PC-3 (cell line): ENCODE measurements at regions of chr13 and their contacts with region 1.

Region 1: DNA sequence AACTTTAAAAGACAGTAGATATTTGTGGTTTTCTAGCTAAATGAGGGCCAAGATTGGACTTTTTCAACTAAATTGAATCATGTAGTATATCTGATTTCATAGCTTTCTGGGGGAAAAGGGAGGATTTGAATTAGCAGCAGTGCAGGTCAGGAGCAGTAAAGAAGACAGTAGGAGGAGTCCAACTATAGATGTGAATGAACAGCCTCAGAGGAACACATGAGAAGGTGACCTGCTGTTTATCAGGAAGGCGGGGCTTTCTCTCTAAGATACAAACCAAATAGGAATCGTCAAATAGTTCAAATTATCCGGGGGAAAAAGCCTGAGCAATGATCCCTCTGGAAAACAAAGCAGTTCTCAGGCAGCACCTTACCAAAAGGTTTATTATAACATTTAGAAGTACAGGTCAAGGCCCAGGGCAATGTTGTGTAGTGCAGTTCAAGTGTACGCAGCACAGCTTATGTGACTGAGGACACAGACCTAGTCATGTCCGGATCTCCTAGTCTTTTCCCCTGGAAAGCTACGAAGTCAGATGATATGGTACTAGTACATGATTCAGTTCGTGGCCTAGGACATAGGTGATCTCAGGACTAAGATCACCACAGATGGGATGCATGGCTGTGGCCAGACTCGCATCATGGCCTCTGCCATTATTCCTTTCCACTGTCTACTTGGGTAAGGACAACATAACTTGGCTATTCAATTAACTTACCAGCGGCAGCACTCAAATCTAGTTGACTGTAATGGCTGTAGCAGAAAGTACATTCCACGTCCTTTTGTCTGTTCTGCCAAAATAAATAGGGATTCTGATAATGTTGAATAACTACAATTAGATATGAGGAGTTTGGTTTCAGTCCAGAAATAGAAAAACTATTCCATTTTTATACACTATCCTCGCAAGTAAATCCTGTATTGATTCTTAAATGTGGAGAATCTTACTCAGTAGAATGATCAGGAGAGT is 40.3 kb downstream of the MPHOSPH8 start:
- DNase-seq: no peak
- ATAC-seq: no peak
- H3K4me3 ChIP-seq: no peak overlapping the region
- H3K27ac ChIP-seq: no peak overlapping the region
- H3K4me1 ChIP-seq: peaks cover 12% of the 10 kb centered on the region
- H3K27me3 ChIP-seq: no peaks in the 10 kb centered on the region
- CTCF ChIP-seq: no peak

Region 2: GRCh38 chr13:19890030-19890429 is 216.3 kb after region 1 on chr13:
- CTCF ChIA-PET with region 1: no interaction called
- POLR2A ChIA-PET with region 1: no interaction called
- intact Hi-C with region 1: loop called (anchors 10 kb)
- DNase-seq: no peak
- ATAC-seq: no peak
- H3K4me3 ChIP-seq: no peak overlapping the region
- H3K27ac ChIP-seq: no peak overlapping the region
- H3K4me1 ChIP-seq: no peaks in the 10 kb centered on the region
- H3K27me3 ChIP-seq: no peaks in the 10 kb centered on the region
- CTCF ChIP-seq: no peak